ENCODE measurements at regions of chr2 and their contacts with region 1.

Region 1: DNA sequence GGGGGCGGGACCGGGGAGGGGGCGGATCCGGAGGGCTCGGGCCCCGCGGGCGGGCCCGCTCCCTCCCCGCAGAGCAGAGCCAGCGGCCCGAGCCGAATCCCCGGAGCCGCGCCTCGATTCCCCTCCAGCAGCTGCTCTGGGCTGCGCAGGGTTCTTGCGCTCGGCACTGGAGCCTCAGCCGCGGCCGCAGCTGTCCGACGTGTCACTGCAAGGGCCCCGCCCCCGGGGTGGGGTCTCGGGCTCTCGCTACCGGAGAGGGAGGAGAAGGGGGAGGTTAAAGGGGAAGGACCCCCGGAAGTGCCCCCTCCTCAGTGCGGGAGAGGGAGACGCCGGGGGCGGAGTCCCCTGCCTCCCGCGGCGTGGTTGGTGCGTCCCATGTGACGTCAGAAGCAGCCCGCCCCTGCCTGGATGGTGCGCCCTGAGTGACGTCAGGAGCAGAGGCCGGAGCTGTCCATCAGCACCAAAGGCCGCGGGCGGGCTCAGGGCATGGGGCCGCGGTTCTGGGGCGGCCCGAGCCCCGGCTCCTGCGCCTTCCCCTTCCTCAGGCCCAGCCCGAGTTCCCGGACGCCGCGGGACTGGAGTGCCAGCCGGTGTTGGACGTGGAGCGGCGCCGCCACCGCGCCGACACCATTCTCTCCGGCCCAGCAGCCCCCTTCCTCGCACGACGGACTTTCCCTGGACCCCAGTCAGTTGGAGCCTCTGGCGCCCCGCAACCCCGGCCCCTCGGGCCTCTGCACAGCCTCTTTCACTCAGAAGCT is at the starts of genes CHPF and TMEM198:
- DNase-seq: peak; percentile 89 to 95
- ATAC-seq: peak; percentile 79 to 91 (median 83)
- H3K4me3 ChIP-seq: peak within 1 kb of the TSS; percentile 64
- H3K4me3 Mint-ChIP-seq: peak within 1 kb of the TSS; percentile 90
- H3K27ac ChIP-seq: peak within 1 kb of the TSS; percentile 86
- H3K27ac Mint-ChIP-seq: peak within 1 kb of the TSS; percentile 84 to 85
- H3K4me1 ChIP-seq: peaks cover 29% of the 10 kb centered on the region
- H3K4me1 Mint-ChIP-seq: peaks cover 30 to 31% of the 10 kb centered on the region in 2 donors
- H3K27me3 ChIP-seq: no peaks in the 10 kb centered on the region
- H3K27me3 Mint-ChIP-seq: peaks cover 6 to 25% of the 10 kb centered on the region in 2 donors
- CTCF ChIP-seq: no peak
- total RNA-seq, gene CHPF: 9.6 to 19.2 (median 12.7) TPM
- total RNA-seq, gene TMEM198: 1.7 to 2.3 (median 1.8) TPM

Region 2: GRCh38 chr2:219521066-219521880 is 22.5 kb before region 1 on chr2:
- intact Hi-C with region 1: no loop called
- DNase-seq: peak in 1 of 2 donors; percentile 34
- ATAC-seq: peak in 1 of 3 donors; percentile 37
- H3K4me3 ChIP-seq: no peak overlapping the region
- H3K4me3 Mint-ChIP-seq: no peak overlapping the region
- H3K27ac ChIP-seq: no peak overlapping the region
- H3K27ac Mint-ChIP-seq: no peak overlapping the region
- H3K4me1 ChIP-seq: peaks cover 2% of the 10 kb centered on the region
- H3K4me1 Mint-ChIP-seq: peaks cover 0 to 11% of the 10 kb centered on the region in 2 donors
- H3K27me3 ChIP-seq: peaks cover 27% of the 10 kb centered on the region
- H3K27me3 Mint-ChIP-seq: peaks cover 69 to 74% of the 10 kb centered on the region in 2 donors
- CTCF ChIP-seq: no peak

Region 3: DNA sequence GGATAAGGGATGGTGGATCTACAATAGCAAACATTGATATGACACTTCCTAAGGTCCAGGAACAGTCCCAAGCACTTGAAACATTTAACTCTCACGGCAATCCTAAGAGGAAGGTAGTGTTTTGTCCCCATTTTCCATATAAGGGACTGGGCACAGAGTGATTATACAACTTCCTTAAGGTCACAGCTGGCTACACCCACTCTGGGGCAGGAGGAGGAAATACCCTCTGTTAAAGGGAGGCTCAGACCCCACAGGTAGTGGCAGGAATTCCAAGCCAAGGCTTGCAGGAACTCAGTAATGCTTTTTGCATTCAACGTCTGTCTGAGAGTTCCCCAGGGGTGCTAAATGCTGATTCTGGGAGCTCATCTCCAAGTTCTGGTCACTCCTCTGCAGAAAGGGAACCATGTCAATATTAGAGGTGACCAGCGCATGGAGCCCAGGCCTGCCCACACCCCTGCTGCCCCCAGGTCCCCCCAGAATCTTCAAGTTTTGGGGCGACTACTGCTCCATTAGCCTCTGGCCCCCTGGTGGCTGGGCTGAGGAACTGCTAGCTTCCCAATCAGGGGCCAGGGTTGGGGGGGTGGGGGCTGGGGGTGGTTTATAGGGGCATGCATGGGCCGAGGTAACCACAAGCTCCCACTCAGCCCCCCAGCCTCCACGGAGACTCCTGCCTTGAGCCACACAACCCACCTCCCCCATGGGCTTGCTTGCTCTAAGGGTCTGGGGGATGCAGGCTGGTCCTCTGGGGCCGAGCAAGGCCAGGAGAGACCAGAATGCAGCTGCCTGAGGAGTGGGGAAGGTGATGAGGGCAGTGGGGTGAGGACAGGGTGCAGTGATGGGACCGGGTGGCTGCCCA is 16.5 kb after region 1 on chr2:
- intact Hi-C with region 1: loop called (anchors 1 kb)
- DNase-seq: peak in 1 of 2 donors; percentile 62
- ATAC-seq: peak; percentile 43 to 75 (median 71)
- H3K4me3 ChIP-seq: no peak overlapping the region
- H3K4me3 Mint-ChIP-seq: no peak overlapping the region
- H3K27ac ChIP-seq: no peak overlapping the region
- H3K27ac Mint-ChIP-seq: no peak overlapping the region
- H3K4me1 ChIP-seq: no peaks in the 10 kb centered on the region
- H3K4me1 Mint-ChIP-seq: no peaks in the 10 kb centered on the region
- H3K27me3 ChIP-seq: no peaks in the 10 kb centered on the region
- H3K27me3 Mint-ChIP-seq: peaks cover 7 to 17% of the 10 kb centered on the region in 2 donors
- CTCF ChIP-seq: peak; percentile 73

Region 4: GRCh38 chr2:219642465-219643080 is 98.8 kb after region 1 on chr2:
- intact Hi-C with region 1: loop called (anchors 1 kb)
- DNase-seq: peak; percentile 81 to 95
- ATAC-seq: peak; percentile 95 to 100 (median 100)
- H3K4me3 ChIP-seq: no peak overlapping the region
- H3K4me3 Mint-ChIP-seq: no peak overlapping the region
- H3K27ac ChIP-seq: no peak overlapping the region
- H3K27ac Mint-ChIP-seq: peak overlapping the region in 1 of 2 donors; percentile 67
- H3K4me1 ChIP-seq: peaks cover 28% of the 10 kb centered on the region
- H3K4me1 Mint-ChIP-seq: peaks cover 0 to 23% of the 10 kb centered on the region in 2 donors
- H3K27me3 ChIP-seq: peaks cover 2% of the 10 kb centered on the region
- H3K27me3 Mint-ChIP-seq: peaks cover 0 to 7% of the 10 kb centered on the region in 2 donors
- CTCF ChIP-seq: peak; percentile 97